ENCODE measurements at regions of chr4 and their contacts with region 1.

Region 1: GRCh38 chr4:147866532-147867271 is 134.8 kb downstream of the ARHGAP10 start:
- DNase-seq: peak; percentile 71 to 88 (median 81)
- ATAC-seq: peak; percentile 99
- H3K4me3 ChIP-seq: no peak overlapping the region
- H3K4me3 Mint-ChIP-seq: no peak overlapping the region
- H3K27ac ChIP-seq: no peak overlapping the region
- H3K27ac Mint-ChIP-seq: no peak overlapping the region
- H3K4me1 ChIP-seq: no peaks in the 10 kb centered on the region
- H3K4me1 Mint-ChIP-seq: peaks cover 0 to 10% (median 0%) of the 10 kb centered on the region in 7 donors
- H3K27me3 ChIP-seq: no peaks in the 10 kb centered on the region
- H3K27me3 Mint-ChIP-seq: no peaks in the 10 kb centered on the region

Region 2: DNA sequence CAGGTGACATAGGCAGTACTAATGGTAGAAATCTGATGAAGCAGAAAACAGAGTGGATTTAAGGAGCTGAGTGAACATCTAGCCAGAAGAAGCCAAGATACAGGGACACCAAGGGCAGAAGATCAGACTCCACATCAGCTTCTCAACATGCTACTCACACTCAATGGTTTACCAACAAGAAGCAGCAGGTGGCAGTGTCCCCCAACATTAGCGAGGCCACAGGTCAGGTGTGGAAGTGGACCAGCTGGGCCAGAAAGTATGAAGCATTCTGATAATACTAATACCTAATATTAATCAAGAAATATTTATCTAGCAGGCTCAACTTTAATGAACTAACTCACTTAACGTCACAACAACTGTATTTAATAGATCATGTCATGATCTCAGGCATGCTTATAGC is 847.6 kb before region 1 on chr4:
- CTCF ChIA-PET with region 1: no interaction called
- POLR2A ChIA-PET with region 1: no interaction called
- intact Hi-C with region 1: loop called in 1 of 2 experiments (anchors 5 kb)
- DNase-seq: peak in 8 of 9 donors; percentile 18 to 41 (median 40)
- ATAC-seq: peak; percentile 37
- H3K4me3 ChIP-seq: no peak overlapping the region
- H3K4me3 Mint-ChIP-seq: no peak overlapping the region
- H3K27ac ChIP-seq: no peak overlapping the region
- H3K27ac Mint-ChIP-seq: no peak overlapping the region
- H3K4me1 ChIP-seq: no peaks in the 10 kb centered on the region
- H3K4me1 Mint-ChIP-seq: no peaks in the 10 kb centered on the region
- H3K27me3 ChIP-seq: no peaks in the 10 kb centered on the region
- H3K27me3 Mint-ChIP-seq: peaks cover 0 to 5% (median 0%) of the 10 kb centered on the region in 5 donors

Region 3: GRCh38 chr4:147596981-147597380 is 269.7 kb before region 1 on chr4:
- CTCF ChIA-PET with region 1: interaction called, 6 read pairs
- POLR2A ChIA-PET with region 1: no interaction called
- intact Hi-C with region 1: loop called (anchors 1 kb)
- DNase-seq: no peak
- ATAC-seq: no peak
- H3K4me3 ChIP-seq: no peak overlapping the region
- H3K4me3 Mint-ChIP-seq: no peak overlapping the region
- H3K27ac ChIP-seq: no peak overlapping the region
- H3K27ac Mint-ChIP-seq: no peak overlapping the region
- H3K4me1 ChIP-seq: no peaks in the 10 kb centered on the region
- H3K4me1 Mint-ChIP-seq: peaks cover 0 to 7% (median 0%) of the 10 kb centered on the region in 7 donors
- H3K27me3 ChIP-seq: no peaks in the 10 kb centered on the region
- H3K27me3 Mint-ChIP-seq: peaks cover 0 to 8% (median 0%) of the 10 kb centered on the region in 5 donors

Region 4: GRCh38 chr4:147683717-147684700 is 182.7 kb before region 1 on chr4 and contains the start of gene PRMT9:
- CTCF ChIA-PET with region 1: interaction called, 7 read pairs
- POLR2A ChIA-PET with region 1: no interaction called
- intact Hi-C with region 1: loop called (anchors 1 kb)
- DNase-seq: peak; percentile 79 to 90 (median 85)
- ATAC-seq: peak; percentile 98
- H3K4me3 ChIP-seq: peak within 1 kb of the TSS; percentile 97
- H3K4me3 Mint-ChIP-seq: peak within 1 kb of the TSS; percentile 89 to 100 (median 97)
- H3K27ac ChIP-seq: peak within 1 kb of the TSS; percentile 95
- H3K27ac Mint-ChIP-seq: peak within 1 kb of the TSS; percentile 86 to 99 (median 97)
- H3K4me1 ChIP-seq: peaks cover 4 to 16% of the 10 kb centered on the region in 2 donors
- H3K4me1 Mint-ChIP-seq: peaks cover 15 to 47% (median 38%) of the 10 kb centered on the region in 7 donors
- H3K27me3 ChIP-seq: no peaks in the 10 kb centered on the region
- H3K27me3 Mint-ChIP-seq: peaks cover 0 to 11% (median 2%) of the 10 kb centered on the region in 5 donors
- total RNA-seq, gene PRMT9: 9.7 to 15.9 (median 10.8) TPM

Region 5: DNA sequence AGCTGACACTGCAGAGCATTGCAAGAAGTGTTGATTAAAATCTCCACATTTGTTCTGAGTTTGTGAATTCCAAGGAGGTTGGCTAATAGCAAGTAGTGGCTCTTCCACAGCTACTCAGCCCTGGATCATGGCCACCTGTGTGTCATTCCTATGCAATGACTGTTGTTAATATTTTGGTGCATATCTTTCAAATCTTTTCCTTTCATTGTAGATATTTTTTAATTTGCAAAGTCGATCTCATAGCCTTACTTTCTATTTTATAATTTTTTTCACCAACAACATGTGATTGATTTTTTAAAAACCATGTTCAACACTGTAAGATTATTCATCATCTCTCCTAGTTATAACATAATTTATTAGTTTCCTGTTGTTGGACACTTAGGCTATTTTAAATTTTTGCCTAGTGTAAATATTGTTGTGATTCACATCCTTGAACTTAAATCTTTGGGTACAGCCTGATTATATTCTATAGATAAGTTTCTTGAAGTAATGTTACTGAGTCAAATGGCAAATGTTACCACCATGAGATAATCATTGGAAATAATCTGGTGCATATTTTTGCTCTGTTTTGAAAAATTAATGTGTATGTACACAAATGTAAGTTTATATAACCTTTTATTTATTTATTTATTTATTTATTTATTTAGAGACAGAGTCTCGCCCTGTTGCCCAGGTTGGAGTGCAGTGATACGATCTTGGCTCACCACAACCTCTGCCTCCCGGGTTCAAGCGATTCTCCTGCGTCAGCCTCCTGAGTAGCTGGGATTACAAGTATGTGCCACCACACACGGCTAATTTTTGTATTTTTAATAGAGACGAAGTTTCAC is 151.9 kb before region 1 on chr4:
- CTCF ChIA-PET with region 1: interaction called, 45 read pairs
- POLR2A ChIA-PET with region 1: no interaction called
- intact Hi-C with region 1: no loop called
- DNase-seq: no peak
- ATAC-seq: no peak
- H3K4me3 ChIP-seq: no peak overlapping the region
- H3K4me3 Mint-ChIP-seq: no peak overlapping the region
- H3K27ac ChIP-seq: no peak overlapping the region
- H3K27ac Mint-ChIP-seq: no peak overlapping the region
- H3K4me1 ChIP-seq: no peaks in the 10 kb centered on the region
- H3K4me1 Mint-ChIP-seq: peaks cover 0 to 4% (median 0%) of the 10 kb centered on the region in 7 donors
- H3K27me3 ChIP-seq: no peaks in the 10 kb centered on the region
- H3K27me3 Mint-ChIP-seq: peaks cover 0 to 27% (median 8%) of the 10 kb centered on the region in 5 donors

Region 6: DNA sequence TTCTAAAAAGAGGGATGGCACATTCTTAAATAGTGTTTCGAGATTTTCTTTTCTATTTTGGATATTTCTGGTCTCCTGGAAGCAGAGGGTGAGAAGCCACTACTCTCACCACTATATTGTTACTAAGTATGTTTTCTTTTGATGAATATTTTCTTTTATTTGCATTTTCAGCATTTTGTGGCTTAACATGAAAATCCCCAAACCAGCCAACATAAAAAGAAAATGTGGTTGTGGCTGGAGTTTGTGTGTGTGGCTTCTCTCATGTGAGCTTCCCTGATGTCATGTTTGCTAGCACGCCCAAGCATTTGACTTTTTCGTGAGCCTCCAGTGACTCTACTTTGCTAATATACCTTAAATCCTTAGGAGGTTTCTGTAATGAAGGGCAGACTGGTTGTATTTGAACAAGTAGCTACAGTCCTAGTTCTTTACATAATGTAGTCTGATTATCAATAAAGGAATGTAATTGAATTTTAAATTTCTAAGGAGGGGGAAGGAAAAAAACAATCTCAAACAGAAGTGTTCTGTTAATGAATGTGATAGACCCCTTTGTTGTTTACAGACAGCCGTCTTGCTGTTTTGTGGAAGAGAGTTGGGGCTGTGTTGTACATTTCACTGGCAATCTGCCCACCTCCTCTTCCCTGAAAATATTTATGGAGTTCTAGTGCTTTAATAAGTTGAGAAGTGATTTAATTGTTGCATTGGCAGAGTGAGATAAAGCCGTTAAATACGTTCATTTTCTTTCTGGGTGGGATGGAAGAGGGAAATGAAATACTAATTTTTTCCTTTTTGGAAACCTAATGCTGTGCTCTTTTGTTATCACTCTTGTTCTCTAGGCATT is 20.2 kb before region 1 on chr4:
- CTCF ChIA-PET with region 1: interaction called, 16 read pairs
- POLR2A ChIA-PET with region 1: no interaction called
- intact Hi-C with region 1: loop called in 1 of 2 experiments (anchors 2 kb)
- DNase-seq: no peak
- ATAC-seq: peak; percentile 60
- H3K4me3 ChIP-seq: no peak overlapping the region
- H3K4me3 Mint-ChIP-seq: no peak overlapping the region
- H3K27ac ChIP-seq: no peak overlapping the region
- H3K27ac Mint-ChIP-seq: no peak overlapping the region
- H3K4me1 ChIP-seq: peaks cover 0 to 3% of the 10 kb centered on the region in 2 donors
- H3K4me1 Mint-ChIP-seq: no peaks in the 10 kb centered on the region
- H3K27me3 ChIP-seq: no peaks in the 10 kb centered on the region
- H3K27me3 Mint-ChIP-seq: peaks cover 0 to 11% (median 0%) of the 10 kb centered on the region in 5 donors

Measured in naive thymus-derived CD4-positive, alpha-beta T cell (primary cell).